ENCODE measurements at regions of chr11 and their contacts with region 1.

Region 1: GRCh38 chr11:33257897-33258630 is 883 bp downstream of the HIPK3 start:
- DNase-seq: peak; percentile 96
- H3K4me3 ChIP-seq: peak overlapping the region; percentile 66 to 97 (median 85)
- H3K27ac ChIP-seq: peak overlapping the region; percentile 99 to 100 (median 100)
- H3K4me1 ChIP-seq: peaks cover 0 to 42% (median 38%) of the 10 kb centered on the region in 4 donors
- H3K27me3 ChIP-seq: no peaks in the 10 kb centered on the region
- CTCF ChIP-seq: peak; percentile 28 to 57 (median 44)
- EP300 ChIP-seq: peak in 1 of 4 donors; percentile 56
- POLR2A ChIP-seq: peak; percentile 31 to 58

Region 2: GRCh38 chr11:32893343-32894148 is 364.5 kb before region 1 on chr11:
- intact Hi-C with region 1: loop called (anchors 10 kb)
- DNase-seq: peak; percentile 68
- H3K4me3 ChIP-seq: peak overlapping the region; percentile 83 to 97 (median 92)
- H3K27ac ChIP-seq: peak overlapping the region; percentile 93 to 99 (median 96)
- H3K4me1 ChIP-seq: peaks cover 0 to 27% (median 18%) of the 10 kb centered on the region in 4 donors
- H3K27me3 ChIP-seq: no peaks in the 10 kb centered on the region
- CTCF ChIP-seq: peak in 3 of 4 experiments; percentile 6 to 49 (median 28)
- EP300 ChIP-seq: no peak
- POLR2A ChIP-seq: no peak

Region 3: DNA sequence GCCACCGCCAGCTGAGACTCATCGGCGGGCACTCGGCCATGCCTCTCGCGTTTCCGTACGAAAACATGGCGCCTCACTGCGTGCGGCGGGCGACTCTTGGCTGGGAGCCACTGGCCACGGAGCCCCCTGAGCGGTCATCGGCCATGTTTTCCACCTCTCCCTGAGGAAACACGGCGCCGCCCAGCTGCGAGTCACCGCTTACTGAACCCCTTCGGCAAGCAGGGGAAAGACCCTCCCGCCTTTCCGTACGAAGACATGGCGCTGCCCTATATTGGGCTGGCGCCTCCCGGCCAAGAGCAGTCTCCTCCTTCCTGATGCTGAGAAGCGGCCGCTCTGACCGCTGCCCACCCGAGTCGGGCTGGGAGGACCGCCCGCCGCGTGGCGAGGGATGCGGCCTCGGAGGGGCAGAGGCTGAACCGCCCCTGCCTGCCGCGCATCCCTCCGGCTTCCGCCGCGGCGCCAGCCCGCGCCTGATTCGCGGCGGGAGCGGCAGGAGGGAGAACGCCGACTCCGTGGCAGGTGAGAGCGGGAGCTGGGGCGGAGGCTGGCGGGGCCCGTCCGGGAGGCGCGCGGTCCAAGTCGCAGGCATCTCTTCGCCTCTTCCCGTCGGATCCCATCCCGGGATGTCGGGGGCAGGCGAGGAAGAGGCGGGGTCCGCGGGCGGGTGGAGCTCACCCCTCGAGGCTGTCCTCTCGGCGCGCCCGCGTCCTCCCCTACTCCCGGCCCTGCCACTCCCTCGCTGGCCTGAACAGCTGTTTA is 218.6 kb before region 1 on chr11 and contains the start of gene TCP11L1:
- intact Hi-C with region 1: loop called (anchors 10 kb)
- DNase-seq: peak; percentile 96
- H3K4me3 ChIP-seq: peak within 1 kb of the TSS; percentile 72 to 98 (median 79)
- H3K27ac ChIP-seq: peak within 1 kb of the TSS; percentile 97 to 100 (median 98)
- H3K4me1 ChIP-seq: peaks cover 0 to 24% (median 21%) of the 10 kb centered on the region in 4 donors
- H3K27me3 ChIP-seq: no peaks in the 10 kb centered on the region
- CTCF ChIP-seq: no peak
- EP300 ChIP-seq: no peak
- POLR2A ChIP-seq: peak; percentile 28 to 45
- total RNA-seq, gene TCP11L1: 38.7 to 70.3 (median 42.7) TPM

Region 4: DNA sequence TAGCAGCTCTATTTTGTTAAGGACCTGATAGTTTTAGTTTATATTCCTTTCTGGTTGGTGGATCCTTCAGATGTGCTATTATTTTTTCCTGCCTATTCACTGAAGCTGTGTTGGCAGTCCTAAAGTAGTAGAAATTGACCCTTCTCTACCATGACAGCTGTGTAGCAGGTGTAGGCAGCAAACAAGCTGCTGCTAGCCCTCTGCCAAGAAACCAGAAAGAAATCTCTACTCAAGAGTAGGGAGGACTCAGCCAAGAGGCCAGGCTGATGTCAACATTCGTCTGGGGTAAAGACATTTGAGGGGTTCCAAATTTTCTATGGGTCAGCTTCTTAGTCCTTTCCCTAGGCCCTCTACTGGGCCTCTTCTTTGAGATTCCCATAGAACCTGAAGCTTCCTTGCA is 148.0 kb before region 1 on chr11:
- intact Hi-C with region 1: no loop called
- DNase-seq: no peak
- H3K4me3 ChIP-seq: no peak overlapping the region
- H3K27ac ChIP-seq: no peak overlapping the region
- H3K4me1 ChIP-seq: no peaks in the 10 kb centered on the region
- H3K27me3 ChIP-seq: no peaks in the 10 kb centered on the region
- CTCF ChIP-seq: no peak
- EP300 ChIP-seq: no peak
- POLR2A ChIP-seq: no peak

Region 5: GRCh38 chr11:33161120-33162005 is 96.7 kb before region 1 on chr11 and contains the start of gene CSTF3:
- intact Hi-C with region 1: loop called (anchors 2 kb)
- DNase-seq: peak; percentile 100
- H3K4me3 ChIP-seq: peak within 1 kb of the TSS; percentile 66 to 81 (median 78)
- H3K27ac ChIP-seq: peak within 1 kb of the TSS; percentile 80 to 84 (median 83)
- H3K4me1 ChIP-seq: peaks cover 0 to 35% (median 24%) of the 10 kb centered on the region in 4 donors
- H3K27me3 ChIP-seq: no peaks in the 10 kb centered on the region
- CTCF ChIP-seq: peak; percentile 12 to 87 (median 77)
- EP300 ChIP-seq: peak in 1 of 4 donors; percentile 37
- POLR2A ChIP-seq: peak; percentile 19 to 57
- total RNA-seq, gene CSTF3: 9.9 to 14.6 (median 11.6) TPM

Region 6: DNA sequence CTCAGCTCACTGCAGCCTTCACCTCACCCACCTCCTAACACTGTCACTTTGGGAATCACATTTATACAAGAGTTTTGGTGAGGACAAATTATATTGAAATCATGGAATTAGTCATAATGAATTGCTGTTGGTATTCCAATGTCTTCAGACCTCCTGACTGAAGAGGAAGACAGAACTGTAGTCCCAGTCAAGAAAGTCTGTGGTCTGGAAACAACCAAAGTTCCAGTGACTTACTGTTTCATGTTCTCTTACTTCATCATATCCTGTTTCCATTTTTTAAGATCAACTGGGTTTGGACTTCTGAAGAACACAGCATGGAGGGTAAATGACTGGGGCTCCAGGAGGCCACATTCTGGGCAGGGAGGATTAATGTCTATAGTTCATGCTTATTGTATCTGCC is 43.9 kb before region 1 on chr11:
- intact Hi-C with region 1: no loop called
- DNase-seq: no peak
- H3K4me3 ChIP-seq: no peak overlapping the region
- H3K27ac ChIP-seq: no peak overlapping the region
- H3K4me1 ChIP-seq: no peaks in the 10 kb centered on the region
- H3K27me3 ChIP-seq: no peaks in the 10 kb centered on the region
- CTCF ChIP-seq: no peak
- EP300 ChIP-seq: peak in 1 of 4 donors; percentile 28
- POLR2A ChIP-seq: no peak

Region 7: DNA sequence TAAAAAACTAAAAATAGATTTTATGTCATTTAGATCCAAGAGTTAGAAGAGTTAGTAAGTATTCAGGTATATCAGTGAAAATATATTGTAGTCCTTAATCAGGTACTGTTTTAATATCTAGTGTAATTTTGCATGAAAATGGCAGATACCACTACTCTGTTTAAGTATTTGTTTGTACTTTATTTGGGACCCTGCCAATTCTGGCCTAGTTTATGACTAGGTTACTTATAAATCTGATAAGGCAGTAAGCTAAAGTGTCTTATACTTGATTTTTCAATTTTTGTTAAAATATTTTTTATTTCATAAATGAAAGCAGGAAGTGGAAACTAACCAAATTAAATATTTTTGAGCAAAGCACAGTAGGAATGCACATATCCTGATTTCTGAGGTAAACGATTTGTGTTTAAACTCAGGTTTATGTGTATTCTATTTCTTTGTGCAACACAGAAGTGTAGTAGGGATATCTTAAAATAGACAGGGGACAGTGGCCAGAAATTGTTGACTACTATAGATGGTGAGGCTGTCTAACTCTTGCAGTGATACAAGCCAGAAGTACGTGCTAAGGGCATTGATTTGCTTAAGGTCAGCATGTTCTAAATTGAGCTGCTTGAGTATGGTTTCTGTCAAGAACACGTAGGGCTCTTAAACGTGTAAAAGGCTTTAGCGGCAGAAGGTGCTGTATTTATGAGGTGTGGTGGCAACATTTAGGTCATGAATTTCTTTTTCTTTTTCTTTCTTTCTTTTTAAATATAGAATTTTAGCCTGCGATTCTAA is 33.1 kb after region 1 on chr11:
- intact Hi-C with region 1: loop called (anchors 1 kb)
- DNase-seq: no peak
- H3K4me3 ChIP-seq: peak overlapping the region in 1 of 4 donors; percentile 27
- H3K27ac ChIP-seq: peak overlapping the region; percentile 64 to 84 (median 82)
- H3K4me1 ChIP-seq: peaks cover 0 to 76% (median 54%) of the 10 kb centered on the region in 4 donors
- H3K27me3 ChIP-seq: no peaks in the 10 kb centered on the region
- CTCF ChIP-seq: no peak
- EP300 ChIP-seq: peak; percentile 90 to 98 (median 96)
- POLR2A ChIP-seq: no peak

Region 8: GRCh38 chr11:33329705-33330329 is 71.8 kb after region 1 on chr11:
- intact Hi-C with region 1: loop called (anchors 1 kb)
- DNase-seq: peak; percentile 71
- H3K4me3 ChIP-seq: no peak overlapping the region
- H3K27ac ChIP-seq: no peak overlapping the region
- H3K4me1 ChIP-seq: peaks cover 0 to 57% (median 46%) of the 10 kb centered on the region in 4 donors
- H3K27me3 ChIP-seq: no peaks in the 10 kb centered on the region
- CTCF ChIP-seq: peak; percentile 32 to 57 (median 53)
- EP300 ChIP-seq: no peak
- POLR2A ChIP-seq: no peak

Region 9: GRCh38 chr11:33736148-33736809 is 478.2 kb after region 1 on chr11 and contains the start of gene CD59:
- intact Hi-C with region 1: loop called (anchors 5 kb)
- DNase-seq: peak; percentile 98
- H3K4me3 ChIP-seq: peak within 1 kb of the TSS; percentile 73 to 91 (median 89)
- H3K27ac ChIP-seq: peak within 1 kb of the TSS; percentile 82 to 93 (median 92)
- H3K4me1 ChIP-seq: peaks cover 0 to 49% (median 41%) of the 10 kb centered on the region in 4 donors
- H3K27me3 ChIP-seq: no peaks in the 10 kb centered on the region
- CTCF ChIP-seq: no peak
- EP300 ChIP-seq: no peak
- POLR2A ChIP-seq: peak; percentile 81 to 83
- total RNA-seq, gene CD59: 160 to 206 (median 183) TPM